AG04449 (cell line): ENCODE measurements at regions of chr1 and their contacts with region 1.

Region 1: GRCh38 chr1:10032590-10033358 is at the start of gene UBE4B:
- DNase-seq: peak; percentile 60
- H3K4me3 ChIP-seq: peak within 1 kb of the TSS; percentile 99
- CTCF ChIP-seq: peak; percentile 91

Region 2: GRCh38 chr1:10048601-10049000 is 15.8 kb after region 1 on chr1:
- CTCF ChIA-PET with region 1: interaction called, 10 read pairs
- POLR2A ChIA-PET with region 1: no interaction called
- DNase-seq: no peak
- H3K4me3 ChIP-seq: no peak overlapping the region
- CTCF ChIP-seq: no peak

Region 3: DNA sequence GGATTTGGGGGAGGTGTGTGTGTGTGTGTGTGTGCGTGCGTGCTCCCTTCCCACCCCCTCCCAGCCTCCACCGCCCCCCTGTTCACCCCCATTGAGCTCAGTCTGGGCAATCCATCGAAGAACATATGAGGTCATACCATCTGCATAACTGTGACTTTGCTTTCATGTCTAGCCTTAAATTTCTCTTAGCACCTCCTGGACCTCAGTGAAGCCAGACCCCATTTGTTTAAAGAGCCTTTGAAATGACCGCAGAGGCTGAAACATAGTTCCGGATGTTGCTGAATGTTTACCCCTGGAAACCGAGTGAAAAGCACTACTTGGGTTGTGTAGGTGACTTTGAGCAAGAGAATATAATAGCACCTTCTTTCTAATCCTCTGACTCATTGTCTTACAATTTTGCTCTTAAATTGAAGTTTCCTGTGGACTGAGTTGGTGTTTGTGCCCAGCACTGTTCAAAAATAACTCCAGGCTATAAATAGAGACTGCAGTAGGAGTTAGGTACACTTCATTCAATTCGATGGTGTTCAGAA is 75.4 kb after region 1 on chr1:
- CTCF ChIA-PET with region 1: no interaction called
- POLR2A ChIA-PET with region 1: no interaction called
- DNase-seq: peak; percentile 24
- H3K4me3 ChIP-seq: no peak overlapping the region
- CTCF ChIP-seq: no peak